Heart left ventricle (tissue), 16 donors: ENCODE measurements at regions of chr10 and their contacts with region 1.

Region 1: DNA sequence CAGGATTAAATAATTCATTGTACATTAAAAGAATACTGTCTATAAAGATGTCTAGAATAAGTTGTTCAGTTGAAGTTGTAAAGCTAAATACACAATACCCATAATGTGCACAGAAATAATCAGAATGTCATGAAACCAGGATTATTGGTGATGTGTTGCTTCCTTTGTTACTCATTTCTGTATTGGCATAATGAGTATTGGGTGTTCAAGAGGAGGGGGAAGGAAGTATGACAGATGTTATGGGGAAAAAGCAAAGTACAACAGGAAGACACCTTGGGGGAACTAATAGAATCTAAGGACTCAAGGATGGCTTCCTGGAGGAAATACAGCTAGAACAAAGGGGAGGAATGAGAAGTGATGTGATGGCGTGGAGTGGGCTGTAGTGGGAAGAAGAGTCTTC is 15.0 kb downstream of the ANKRD1 start:
- DNase-seq: no peak
- ATAC-seq: no peak
- H3K4me3 ChIP-seq: no peak overlapping the region
- H3K27ac ChIP-seq: no peak overlapping the region
- H3K4me1 ChIP-seq: no peaks in the 10 kb centered on the region
- H3K27me3 ChIP-seq: no peaks in the 10 kb centered on the region
- CTCF ChIP-seq: no peak
- POLR2A ChIP-seq: no peak

Region 2: DNA sequence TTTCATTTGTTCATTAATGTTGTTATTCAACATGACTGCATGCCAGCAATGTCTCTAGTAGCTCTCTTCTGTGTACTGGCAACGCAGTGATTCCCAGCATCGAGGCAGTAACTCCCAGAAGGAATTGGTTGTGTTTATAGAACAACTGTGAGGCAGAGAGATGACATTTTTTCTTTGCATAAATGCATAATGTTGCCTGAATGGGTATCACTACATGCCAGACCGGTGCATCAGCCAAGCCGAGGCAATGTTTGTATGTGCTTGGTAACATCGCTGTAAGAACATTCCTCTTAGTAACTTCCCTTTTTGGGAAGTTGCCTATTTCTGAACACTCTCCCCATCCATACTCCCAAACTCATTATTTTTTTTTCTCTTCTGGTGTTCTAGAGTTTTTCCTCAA is 231.0 kb before region 1 on chr10:
- intact Hi-C with region 1: no loop called
- DNase-seq: no peak
- ATAC-seq: no peak
- H3K4me3 ChIP-seq: no peak overlapping the region
- H3K27ac ChIP-seq: no peak overlapping the region
- H3K4me1 ChIP-seq: no peaks in the 10 kb centered on the region
- H3K27me3 ChIP-seq: peaks cover 0 to 8% (median 0%) of the 10 kb centered on the region in 9 donors
- CTCF ChIP-seq: no peak
- POLR2A ChIP-seq: no peak

Region 3: DNA sequence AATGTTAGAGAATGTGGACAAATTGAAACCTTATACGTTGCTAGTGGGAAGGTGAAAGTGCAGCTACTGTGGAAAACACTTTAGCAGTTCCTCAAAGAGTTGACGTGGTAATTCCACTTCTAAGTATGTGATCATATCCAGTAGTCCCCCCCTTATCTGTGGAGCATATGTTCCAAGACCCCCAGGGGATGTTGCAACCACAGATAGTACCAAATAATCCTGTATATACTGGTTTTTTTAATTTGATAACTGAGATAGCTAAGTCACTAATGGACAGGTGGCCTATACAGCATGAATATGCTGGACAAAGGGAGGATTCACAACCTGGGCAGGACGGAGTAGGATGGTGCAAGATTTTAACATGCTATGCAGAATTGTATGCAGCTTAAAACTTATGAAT is 351.4 kb after region 1 on chr10:
- intact Hi-C with region 1: loop called in 4 of 10 experiments (anchors 5 kb)
- DNase-seq: no peak
- ATAC-seq: no peak
- H3K4me3 ChIP-seq: no peak overlapping the region
- H3K27ac ChIP-seq: no peak overlapping the region
- H3K4me1 ChIP-seq: peaks cover 0 to 5% (median 0%) of the 10 kb centered on the region in 12 donors
- H3K27me3 ChIP-seq: no peaks in the 10 kb centered on the region
- CTCF ChIP-seq: no peak
- POLR2A ChIP-seq: no peak